Activated CD8-positive, alpha-beta T cell treated with anti-CD3 and anti-CD28 coated beads, Interleukin-2, amount 10 ng/mL, durations not matched to agents 7 days and 5 days (primary cell): ENCODE measurements at regions of chr1 and their contacts with region 1.

Region 1: GRCh38 chr1:212665241-212666115 is 34.2 kb downstream of the BATF3 start:
- DNase-seq: peak; percentile 85
- ATAC-seq: peak; percentile 99
- H3K4me3 Mint-ChIP-seq: peak overlapping the region; percentile 79
- H3K27ac Mint-ChIP-seq: peak overlapping the region; percentile 82
- H3K4me1 Mint-ChIP-seq: peaks cover 35% of the 10 kb centered on the region
- H3K27me3 Mint-ChIP-seq: peaks cover 15% of the 10 kb centered on the region

Region 2: GRCh38 chr1:212683357-212683722 is 17.9 kb after region 1 on chr1:
- CTCF ChIA-PET with region 1: interaction called, 46 read pairs
- POLR2A ChIA-PET with region 1: interaction called, 3 read pairs
- DNase-seq: peak; percentile 88
- ATAC-seq: peak; percentile 81
- H3K4me3 Mint-ChIP-seq: peak overlapping the region; percentile 56
- H3K27ac Mint-ChIP-seq: peak overlapping the region; percentile 94
- H3K4me1 Mint-ChIP-seq: peaks cover 85% of the 10 kb centered on the region
- H3K27me3 Mint-ChIP-seq: no peaks in the 10 kb centered on the region

Region 3: DNA sequence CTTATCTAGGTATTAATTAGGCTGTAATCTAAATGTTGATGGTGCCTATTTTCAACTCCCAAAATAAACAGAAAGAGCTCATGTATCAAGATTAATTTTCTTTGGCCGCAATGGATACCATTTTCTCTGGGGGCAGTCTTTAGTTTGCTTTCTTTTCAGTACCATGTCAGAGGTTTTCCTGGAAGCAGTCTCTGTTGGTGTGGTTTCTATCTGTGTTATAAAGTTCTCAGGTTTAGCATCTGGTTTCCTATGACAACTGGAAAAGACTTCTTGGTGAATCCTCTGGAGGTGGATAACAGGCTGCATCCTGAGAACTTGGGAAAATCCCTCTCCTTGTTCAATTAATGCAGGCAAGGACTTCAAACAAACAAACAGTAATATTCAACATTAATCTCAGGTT is 72.9 kb after region 1 on chr1:
- CTCF ChIA-PET with region 1: interaction called, 11 read pairs
- POLR2A ChIA-PET with region 1: no interaction called
- DNase-seq: no peak
- ATAC-seq: peak; percentile 53
- H3K4me3 Mint-ChIP-seq: no peak overlapping the region
- H3K27ac Mint-ChIP-seq: peak overlapping the region; percentile 69
- H3K4me1 Mint-ChIP-seq: peaks cover 33% of the 10 kb centered on the region
- H3K27me3 Mint-ChIP-seq: no peaks in the 10 kb centered on the region

Region 4: GRCh38 chr1:212760126-212760823 is 94.8 kb after region 1 on chr1:
- CTCF ChIA-PET with region 1: interaction called, 10 read pairs
- POLR2A ChIA-PET with region 1: no interaction called
- DNase-seq: peak; percentile 69
- ATAC-seq: peak; percentile 77
- H3K4me3 Mint-ChIP-seq: no peak overlapping the region
- H3K27ac Mint-ChIP-seq: no peak overlapping the region
- H3K4me1 Mint-ChIP-seq: peaks cover 8% of the 10 kb centered on the region
- H3K27me3 Mint-ChIP-seq: no peaks in the 10 kb centered on the region

Region 5: DNA sequence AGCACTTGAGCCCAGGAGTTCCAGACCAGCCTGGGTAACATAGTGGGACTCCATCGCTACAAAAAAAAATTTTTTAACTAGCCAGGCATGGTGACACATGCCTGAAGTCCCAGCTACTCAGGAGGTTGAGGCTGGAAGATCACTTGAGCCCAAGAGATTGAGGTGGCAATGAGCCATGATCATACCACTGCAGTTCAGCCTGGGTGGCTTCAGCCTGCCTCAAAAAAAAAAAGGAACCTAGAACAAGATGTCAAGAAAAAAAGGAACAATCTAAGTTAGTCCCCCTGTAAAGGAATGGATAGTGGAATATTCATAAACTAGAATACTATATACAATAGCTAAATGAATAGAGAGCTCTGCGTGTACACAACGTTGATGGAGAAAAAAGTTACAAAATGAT is 111.7 kb after region 1 on chr1:
- CTCF ChIA-PET with region 1: interaction called, 76 read pairs
- POLR2A ChIA-PET with region 1: no interaction called
- DNase-seq: no peak
- ATAC-seq: no peak
- H3K4me3 Mint-ChIP-seq: no peak overlapping the region
- H3K27ac Mint-ChIP-seq: no peak overlapping the region
- H3K4me1 Mint-ChIP-seq: no peaks in the 10 kb centered on the region
- H3K27me3 Mint-ChIP-seq: no peaks in the 10 kb centered on the region

Region 6: DNA sequence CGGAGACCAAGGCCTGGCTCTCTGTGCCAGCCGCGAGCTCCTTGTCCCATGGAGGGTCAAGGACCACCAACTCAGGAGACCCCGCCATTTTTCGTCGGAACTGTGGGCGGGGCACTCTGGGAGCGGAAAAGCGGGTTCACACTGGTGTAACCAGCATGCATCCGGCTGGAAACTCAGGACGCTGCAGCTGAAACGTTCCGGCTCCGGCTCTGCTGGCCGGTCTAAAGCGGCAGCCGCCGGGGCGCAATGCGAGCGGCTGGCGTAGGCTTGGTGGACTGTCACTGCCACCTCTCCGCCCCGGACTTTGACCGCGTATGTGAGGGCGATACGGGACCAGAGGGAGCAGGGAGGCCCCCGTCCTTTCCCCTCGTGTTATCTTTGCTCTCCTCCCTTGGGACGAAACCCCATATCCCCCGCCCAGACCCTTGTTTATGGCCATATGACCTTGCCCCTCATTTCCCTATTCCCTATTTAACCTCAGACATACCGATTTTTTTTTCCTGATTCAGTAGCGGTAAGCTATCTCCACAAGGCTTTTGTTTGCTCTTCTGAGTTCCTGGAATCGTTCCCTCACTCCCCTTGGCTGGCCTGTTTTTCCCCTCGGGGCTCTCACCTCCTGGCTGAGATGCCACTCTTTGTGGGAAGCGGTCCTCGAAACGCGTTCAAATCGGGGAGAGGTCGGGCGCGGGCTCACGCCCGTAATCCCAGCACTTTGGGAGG is 126.4 kb after region 1 on chr1 and contains the starts of genes NSL1 and TATDN3:
- CTCF ChIA-PET with region 1: interaction called, 35 read pairs
- POLR2A ChIA-PET with region 1: interaction called, 4 read pairs
- DNase-seq: peak; percentile 94
- ATAC-seq: peak; percentile 90
- H3K4me3 Mint-ChIP-seq: peak within 1 kb of the TSS; percentile 96
- H3K27ac Mint-ChIP-seq: peak within 1 kb of the TSS; percentile 96
- H3K4me1 Mint-ChIP-seq: peaks cover 35% of the 10 kb centered on the region
- H3K27me3 Mint-ChIP-seq: no peaks in the 10 kb centered on the region
- total RNA-seq, gene NSL1: 49.5 to 55.0 TPM
- total RNA-seq, gene TATDN3: 15.3 to 17.0 TPM

Region 7: DNA sequence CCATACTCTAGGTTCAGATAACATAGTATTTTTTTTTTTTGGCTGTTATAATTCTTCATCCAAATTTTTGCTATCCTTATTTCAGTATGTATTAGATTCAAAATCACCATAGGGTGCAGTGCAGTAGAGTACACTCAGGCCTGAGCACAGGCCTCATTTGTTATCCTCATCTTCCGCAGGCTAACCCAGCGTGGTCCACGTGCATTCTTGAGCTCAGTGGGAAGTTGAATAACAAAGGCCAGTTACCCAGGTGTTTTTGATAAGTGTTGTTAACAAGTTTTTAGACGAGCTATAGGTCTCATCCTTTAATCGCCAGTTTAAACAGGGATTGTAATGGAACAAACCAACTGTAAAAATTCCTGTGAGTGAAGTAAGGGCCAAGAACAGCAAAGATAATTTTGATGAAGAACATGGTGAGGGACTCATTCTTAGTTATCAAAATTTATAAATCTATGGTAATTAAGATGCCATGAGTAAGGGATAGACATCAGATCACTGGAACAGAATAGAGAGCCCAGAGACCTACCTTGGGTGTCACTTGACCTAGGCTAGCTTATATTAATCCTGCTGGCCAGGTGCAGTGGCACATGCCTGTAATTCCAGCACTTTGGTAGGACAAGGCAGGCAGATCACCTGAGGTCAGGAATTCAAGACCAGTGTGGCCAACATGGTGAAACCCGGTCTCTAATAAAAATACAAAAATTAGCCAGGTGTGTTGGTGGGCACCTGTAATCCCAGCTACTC is 214.6 kb after region 1 on chr1:
- CTCF ChIA-PET with region 1: no interaction called
- POLR2A ChIA-PET with region 1: no interaction called
- DNase-seq: no peak
- ATAC-seq: no peak
- H3K4me3 Mint-ChIP-seq: no peak overlapping the region
- H3K27ac Mint-ChIP-seq: no peak overlapping the region
- H3K4me1 Mint-ChIP-seq: no peaks in the 10 kb centered on the region
- H3K27me3 Mint-ChIP-seq: no peaks in the 10 kb centered on the region